Activated CD4-positive, alpha-beta T cell treated with anti-CD3 and anti-CD28 coated beads, Interleukin-2, amount 10 ng/mL, durations not matched to agents 7 days and 5 days (primary cell): ENCODE measurements at regions of chr15 and their contacts with region 1.

Region 1: DNA sequence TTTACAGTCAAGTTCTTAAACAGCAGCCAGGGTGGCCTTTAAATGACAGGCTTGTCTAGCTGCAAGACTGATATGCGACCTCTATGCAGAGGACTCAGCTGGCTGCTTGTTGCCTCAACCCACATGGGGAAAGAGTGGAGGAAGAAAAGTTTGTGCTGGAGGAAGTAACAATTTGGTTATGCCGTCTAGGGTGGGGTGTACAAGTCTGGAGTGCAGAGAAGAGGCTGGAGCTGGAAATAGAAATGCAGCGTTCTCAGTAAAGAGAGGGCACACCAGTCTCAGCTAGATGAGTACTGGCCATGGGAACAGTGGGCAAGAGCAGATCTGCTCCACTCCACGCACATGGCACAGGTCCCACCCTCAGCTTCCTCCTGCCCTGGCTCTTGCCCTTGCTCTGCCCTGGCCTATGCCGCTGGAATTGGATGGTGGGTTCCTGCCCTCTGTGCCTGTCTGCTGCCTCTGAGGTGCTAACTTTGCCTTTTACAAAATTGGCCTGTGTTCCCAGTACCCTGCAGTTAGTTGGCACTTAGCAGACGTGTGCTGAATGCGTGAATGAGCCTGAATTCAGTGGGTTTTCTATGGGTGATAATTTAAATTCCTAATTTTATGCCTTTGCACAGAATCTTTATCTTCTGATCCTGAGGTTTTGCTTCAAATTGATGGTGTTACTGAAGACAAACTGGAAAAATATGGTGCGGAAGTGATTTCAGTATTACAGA is 59.7 kb upstream of the FURIN start:
- DNase-seq: no peak
- H3K4me3 Mint-ChIP-seq: no peak overlapping the region
- H3K27ac Mint-ChIP-seq: peak overlapping the region; percentile 79
- H3K4me1 Mint-ChIP-seq: peaks cover 61% of the 10 kb centered on the region
- H3K27me3 Mint-ChIP-seq: no peaks in the 10 kb centered on the region

Region 2: DNA sequence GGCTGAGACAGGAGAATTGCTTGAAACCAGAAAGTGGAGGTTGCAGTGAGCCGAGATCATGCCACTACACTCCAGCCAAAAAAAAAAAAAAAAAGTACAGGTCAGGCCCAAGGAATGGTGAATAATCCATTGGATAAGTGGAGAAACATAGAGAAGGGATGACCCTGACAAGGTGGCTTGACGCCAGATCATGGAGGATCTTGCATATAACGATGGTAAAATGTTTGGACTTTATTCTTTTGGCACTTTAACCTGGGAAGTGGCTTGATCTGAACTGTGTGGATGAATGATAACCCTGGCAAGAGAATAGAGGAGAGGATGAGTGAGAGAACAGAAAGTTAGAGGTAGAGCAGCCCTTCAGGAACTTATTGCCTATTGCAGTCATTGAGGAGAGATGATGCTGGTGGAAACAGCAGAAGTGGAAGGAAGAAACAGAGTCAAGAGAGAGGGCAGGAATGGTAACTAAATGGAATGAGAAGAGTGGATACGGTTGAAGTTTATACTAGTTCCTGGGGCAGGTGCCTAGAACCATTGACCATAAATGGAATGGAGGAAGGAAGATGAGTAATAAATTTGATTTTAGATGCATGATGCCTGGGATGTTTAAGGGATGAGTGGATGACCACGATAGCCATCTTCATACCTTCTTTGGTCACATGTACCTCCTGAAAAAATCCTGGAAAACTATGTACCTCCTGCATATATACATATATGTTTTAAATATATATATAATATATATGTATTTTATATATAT is 33.8 kb before region 1 on chr15:
- CTCF ChIA-PET with region 1: no interaction called
- POLR2A ChIA-PET with region 1: no interaction called
- DNase-seq: no peak
- H3K4me3 Mint-ChIP-seq: no peak overlapping the region
- H3K27ac Mint-ChIP-seq: no peak overlapping the region
- H3K4me1 Mint-ChIP-seq: peaks cover 13% of the 10 kb centered on the region
- H3K27me3 Mint-ChIP-seq: no peaks in the 10 kb centered on the region

Region 3: GRCh38 chr15:90790561-90790960 is 18.1 kb before region 1 on chr15:
- CTCF ChIA-PET with region 1: interaction called, 10 read pairs
- POLR2A ChIA-PET with region 1: interaction called, 7 read pairs
- DNase-seq: no peak
- H3K4me3 Mint-ChIP-seq: no peak overlapping the region
- H3K27ac Mint-ChIP-seq: no peak overlapping the region
- H3K4me1 Mint-ChIP-seq: peaks cover 1% of the 10 kb centered on the region
- H3K27me3 Mint-ChIP-seq: no peaks in the 10 kb centered on the region